ENCODE measurements at regions of chr5 and their contacts with region 1.

Region 1: DNA sequence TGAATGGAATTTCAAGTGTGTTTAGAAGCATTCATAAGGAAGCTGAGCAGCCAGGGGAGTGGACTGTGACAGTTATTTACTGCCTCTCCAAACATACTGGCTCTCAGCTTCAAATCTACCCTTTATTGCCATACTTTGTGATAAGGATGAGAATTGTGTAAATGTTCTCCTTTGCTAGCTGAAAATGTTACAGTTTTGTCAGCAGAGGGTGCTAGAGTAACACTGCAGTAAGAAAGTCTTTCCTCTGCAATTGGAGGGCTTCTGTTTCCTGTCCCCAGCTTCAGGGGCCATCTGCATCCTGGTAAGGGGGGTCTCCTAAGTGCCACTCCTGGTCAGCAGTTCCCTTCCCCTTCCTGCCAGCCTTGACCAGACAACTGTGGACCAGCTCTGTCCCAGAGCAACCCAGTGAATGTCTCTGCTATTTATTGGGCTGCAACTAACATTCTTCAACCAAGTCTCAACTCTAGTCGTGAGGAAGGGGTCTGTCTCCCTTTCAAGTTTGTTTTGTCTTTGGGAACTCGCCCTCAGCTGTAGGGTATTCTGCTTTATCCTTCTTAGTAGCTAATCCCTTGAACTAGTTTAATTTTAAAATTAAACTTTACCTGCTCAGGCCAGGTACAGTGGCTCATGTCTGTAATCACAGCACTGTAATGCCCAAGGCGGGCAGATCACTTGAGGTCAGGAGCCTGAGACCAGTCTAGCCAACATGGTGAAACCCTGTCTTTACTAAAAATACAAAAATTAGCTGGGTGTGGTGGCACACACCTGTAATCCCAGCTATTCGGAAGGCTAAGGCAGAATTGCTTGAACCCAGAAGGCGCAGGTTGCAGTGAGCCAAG is 45.3 kb downstream of the RAPGEF6 start:
- DNase-seq: no peak
- H3K4me3 ChIP-seq: no peak overlapping the region
- CTCF ChIP-seq: peak; percentile 73

Region 2: DNA sequence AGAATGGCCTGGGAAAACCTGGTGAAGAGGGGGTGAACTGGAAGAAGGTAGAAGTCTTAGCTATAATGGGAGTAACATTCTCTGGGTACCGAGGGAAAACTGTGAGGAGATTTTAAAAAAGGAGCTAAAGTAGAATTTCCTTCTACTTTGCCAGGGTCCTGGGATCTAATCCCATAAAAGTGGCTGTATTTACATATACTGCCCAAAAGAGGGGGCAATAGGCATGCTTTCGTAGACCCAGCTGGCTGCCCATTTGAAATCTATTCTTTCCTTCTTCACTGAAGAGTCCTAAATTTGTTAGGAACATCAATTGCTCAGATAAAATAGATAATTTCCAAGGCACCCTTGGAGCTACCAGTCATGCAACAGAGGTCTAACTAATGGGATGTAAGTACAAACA is 166.7 kb before region 1 on chr5:
- CTCF ChIA-PET with region 1: interaction called, 11 read pairs
- POLR2A ChIA-PET with region 1: no interaction called
- DNase-seq: no peak
- H3K4me3 ChIP-seq: no peak overlapping the region
- CTCF ChIP-seq: peak; percentile 49

Region 3: DNA sequence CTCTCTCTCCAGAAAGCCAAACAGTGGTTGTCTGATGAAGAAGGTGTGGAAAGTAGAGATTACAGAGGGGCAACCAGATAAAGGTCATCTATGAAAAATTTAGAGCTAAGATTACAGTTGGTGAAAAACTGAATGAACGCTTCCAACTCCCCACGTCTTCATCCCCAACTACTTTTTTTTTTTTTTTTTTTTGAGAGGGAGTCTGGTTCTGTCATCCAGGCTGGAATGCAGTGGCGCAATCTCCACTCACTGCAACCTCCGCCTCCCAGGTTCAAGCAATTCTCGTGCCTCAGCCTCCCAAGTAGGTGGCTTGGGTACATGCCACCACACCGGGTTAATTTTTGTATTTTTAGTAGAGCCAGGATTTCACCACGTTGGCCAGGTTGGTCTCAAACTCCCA is 19.0 kb before region 1 on chr5:
- CTCF ChIA-PET with region 1: interaction called, 21 read pairs
- POLR2A ChIA-PET with region 1: no interaction called
- DNase-seq: no peak
- H3K4me3 ChIP-seq: no peak overlapping the region
- CTCF ChIP-seq: no peak

Region 4: GRCh38 chr5:131610198-131611063 is 20.7 kb after region 1 on chr5:
- CTCF ChIA-PET with region 1: interaction called, 20 read pairs
- POLR2A ChIA-PET with region 1: no interaction called
- DNase-seq: peak; percentile 85
- H3K4me3 ChIP-seq: no peak overlapping the region
- CTCF ChIP-seq: no peak

Region 5: DNA sequence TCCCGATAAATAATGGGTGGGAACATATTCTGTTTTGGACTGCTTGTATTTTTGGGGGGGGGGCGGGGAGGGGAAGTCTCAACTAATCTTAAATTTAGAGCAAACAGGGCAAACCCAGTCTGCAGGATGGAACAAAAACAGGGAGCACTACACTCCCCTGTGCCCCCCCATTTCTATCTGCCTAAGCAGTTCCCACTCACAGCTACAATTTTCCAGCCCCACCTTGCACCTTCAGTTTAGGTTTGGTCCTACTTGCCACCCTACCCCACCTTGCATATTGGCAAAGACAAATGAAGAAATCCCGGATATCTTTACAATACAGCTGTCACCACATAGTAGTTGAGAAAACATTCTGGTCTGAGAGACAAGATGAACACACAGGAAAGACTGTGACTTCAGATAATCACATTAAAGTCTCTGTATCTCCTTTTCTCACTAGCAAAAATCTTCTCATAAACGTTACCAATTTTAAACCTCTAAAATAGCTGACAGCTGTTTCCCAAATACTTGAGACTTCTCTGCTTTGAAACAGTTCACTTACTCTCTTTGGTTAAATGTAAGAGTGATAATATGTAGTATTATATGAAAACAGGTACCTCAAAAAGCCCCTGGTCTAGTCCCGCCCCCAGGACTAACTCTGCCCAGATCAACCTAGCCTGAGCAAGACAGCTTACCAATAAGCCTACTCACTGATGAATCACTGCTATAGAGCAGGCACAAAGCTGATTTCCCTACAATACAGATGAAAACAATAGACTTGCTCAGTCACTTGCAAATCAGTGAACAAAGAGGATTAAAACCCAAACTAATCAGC is 50.5 kb after region 1 on chr5:
- CTCF ChIA-PET with region 1: interaction called, 13 read pairs
- POLR2A ChIA-PET with region 1: no interaction called
- DNase-seq: no peak
- H3K4me3 ChIP-seq: no peak overlapping the region
- CTCF ChIP-seq: no peak

Region 6: GRCh38 chr5:132007399-132008165 is 417.9 kb after region 1 on chr5:
- CTCF ChIA-PET with region 1: interaction called, 294 read pairs
- POLR2A ChIA-PET with region 1: no interaction called
- DNase-seq: peak; percentile 17
- H3K4me3 ChIP-seq: no peak overlapping the region
- CTCF ChIP-seq: peak; percentile 73

Measured in AG04449 (cell line).